ENCODE measurements at regions of chr1 and their contacts with region 1.

Region 1: DNA sequence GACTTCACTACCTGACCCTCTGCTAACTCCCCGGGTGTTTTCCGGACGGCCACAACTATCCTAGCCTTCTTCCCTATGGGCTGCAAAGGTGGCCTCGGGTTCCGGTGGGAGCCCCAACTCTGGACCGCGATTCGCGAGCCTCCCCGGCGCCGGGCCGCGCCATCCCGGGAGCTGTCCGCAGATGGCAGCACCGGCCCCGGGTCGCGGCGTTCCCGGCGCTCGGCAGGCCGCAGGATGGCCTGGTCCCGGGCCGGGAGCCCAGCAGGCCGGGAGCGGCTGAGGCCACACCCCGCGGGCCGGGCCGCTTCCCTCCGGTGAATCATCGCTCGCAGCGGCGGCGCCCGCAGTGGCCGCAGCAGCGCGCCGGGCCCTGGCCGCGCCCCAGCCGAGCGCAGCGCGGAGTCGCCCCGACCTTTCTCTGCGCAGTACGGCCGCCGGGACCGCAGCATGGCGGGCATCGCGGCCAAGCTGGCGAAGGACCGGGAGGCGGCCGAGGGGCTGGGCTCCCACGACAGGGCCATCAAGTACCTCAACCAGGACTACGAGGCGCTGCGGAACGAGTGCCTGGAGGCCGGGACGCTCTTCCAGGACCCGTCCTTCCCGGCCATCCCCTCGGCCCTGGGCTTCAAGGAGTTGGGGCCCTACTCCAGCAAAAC is at the start of gene CAPN2:
- DNase-seq: no peak
- H3K4me3 ChIP-seq: peak within 1 kb of the TSS; percentile 82
- H3K27me3 ChIP-seq: no peaks in the 10 kb centered on the region
- CTCF ChIP-seq: peak; percentile 58
- polyA plus RNA-seq, gene CAPN2: 219 and 222 TPM in 2 replicates

Region 2: DNA sequence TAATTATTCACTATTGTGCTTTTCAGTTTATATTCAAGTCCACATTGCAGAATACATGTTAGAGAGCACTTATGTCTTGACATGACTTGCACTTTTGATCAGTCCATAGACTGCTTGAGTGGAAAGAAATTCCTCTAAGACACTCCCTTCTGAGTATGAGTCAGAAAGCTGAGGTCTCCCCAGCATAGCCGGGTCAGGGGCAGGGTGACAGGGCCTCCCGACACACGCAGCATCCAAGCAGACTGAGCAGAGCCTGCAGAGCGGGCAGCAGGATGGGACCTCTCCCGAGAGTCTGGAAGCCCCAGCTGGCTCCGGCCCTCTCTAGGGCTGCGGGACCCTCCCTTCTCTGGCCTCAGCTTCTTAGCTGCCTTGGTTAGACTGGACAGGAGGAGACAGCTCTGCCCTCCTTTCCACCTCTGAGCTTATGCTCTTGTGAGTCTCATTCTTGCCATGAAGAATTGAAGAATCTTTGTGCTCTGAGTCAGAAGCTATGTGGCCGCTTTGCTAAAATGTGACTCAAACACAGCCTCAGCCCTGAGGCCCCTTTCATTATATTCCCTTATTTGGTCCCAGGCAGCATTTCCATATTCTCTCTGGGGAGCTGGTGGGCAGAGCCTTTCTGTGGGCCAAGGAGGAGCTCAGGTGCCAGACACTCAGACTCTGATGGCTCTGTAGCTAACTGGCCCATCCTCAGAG is 11.2 kb before region 1 on chr1:
- CTCF ChIA-PET with region 1: interaction called, 12 read pairs
- POLR2A ChIA-PET with region 1: no interaction called
- DNase-seq: peak; percentile 92
- H3K4me3 ChIP-seq: no peak overlapping the region
- H3K27me3 ChIP-seq: no peaks in the 10 kb centered on the region
- CTCF ChIP-seq: no peak

Region 3: GRCh38 chr1:223738465-223739365 is 26.4 kb after region 1 on chr1:
- CTCF ChIA-PET with region 1: interaction called, 17 read pairs
- POLR2A ChIA-PET with region 1: interaction called, 5 read pairs
- DNase-seq: no peak
- H3K4me3 ChIP-seq: no peak overlapping the region
- H3K27me3 ChIP-seq: no peaks in the 10 kb centered on the region
- CTCF ChIP-seq: no peak

Measured in BJ (cell line).